ENCODE measurements at regions of chr12 and their contacts with region 1.

Region 1: DNA sequence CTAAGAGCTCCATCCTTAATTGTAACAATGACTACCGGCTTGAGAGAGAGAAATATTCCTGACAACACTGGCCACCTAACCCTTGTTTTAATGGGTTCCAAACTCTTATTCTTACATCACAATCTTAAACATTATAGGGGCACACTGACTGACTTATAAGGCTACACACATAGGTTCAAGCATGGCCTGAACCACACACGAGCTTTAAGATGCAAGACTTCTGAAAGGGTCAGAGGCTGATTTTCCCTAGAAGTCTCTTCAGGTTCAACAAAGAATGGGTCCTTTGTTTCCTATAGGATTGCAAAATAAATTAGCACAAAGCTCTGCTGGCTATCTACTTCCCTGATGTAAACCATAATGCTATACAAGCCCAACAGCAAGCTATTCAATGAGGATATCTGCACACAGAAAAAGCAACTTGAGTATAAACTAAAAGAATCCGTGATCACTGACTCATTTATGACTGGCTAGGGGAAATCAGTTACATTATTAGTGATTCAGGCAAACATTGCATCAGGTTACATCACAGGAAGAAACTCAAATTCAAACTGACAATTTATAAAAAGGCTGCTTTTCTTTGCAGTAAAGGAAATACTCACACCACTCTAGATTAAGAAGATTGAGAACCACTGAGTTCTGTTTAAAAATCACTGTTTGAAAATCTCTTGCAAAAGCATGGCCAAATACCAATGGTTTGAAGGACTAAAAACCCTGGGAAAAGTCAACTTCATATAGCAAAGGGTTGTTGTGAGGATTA is 8.5 kb downstream of the BTG1 start:
- DNase-seq: peak in 1 of 9 experiments; percentile 43
- ATAC-seq: no peak
- H3K4me3 ChIP-seq: peak overlapping the region; percentile 66 to 91
- H3K4me3 Mint-ChIP-seq: peak overlapping the region; percentile 96
- H3K27ac ChIP-seq: peak overlapping the region; percentile 45 to 92
- H3K27ac Mint-ChIP-seq: peak overlapping the region; percentile 99
- H3K4me1 ChIP-seq: peaks cover 47% of the 10 kb centered on the region
- H3K4me1 Mint-ChIP-seq: peaks cover 51% of the 10 kb centered on the region
- H3K27me3 ChIP-seq: no peaks in the 10 kb centered on the region
- H3K27me3 Mint-ChIP-seq: no peaks in the 10 kb centered on the region
- CTCF ChIP-seq: no peak

Region 2: GRCh38 chr12:91991399-91992187 is 145.6 kb before region 1 on chr12:
- CTCF ChIA-PET with region 1: interaction called, 6 read pairs
- POLR2A ChIA-PET with region 1: interaction called, 4 read pairs
- intact Hi-C with region 1: loop called in 1 of 2 experiments (anchors 5 kb)
- DNase-seq: peak in 2 of 9 experiments; percentile 61 to 77
- ATAC-seq: peak; percentile 71
- H3K4me3 ChIP-seq: no peak overlapping the region
- H3K4me3 Mint-ChIP-seq: no peak overlapping the region
- H3K27ac ChIP-seq: no peak overlapping the region
- H3K27ac Mint-ChIP-seq: peak overlapping the region; percentile 66
- H3K4me1 ChIP-seq: peaks cover 25% of the 10 kb centered on the region
- H3K4me1 Mint-ChIP-seq: peaks cover 65% of the 10 kb centered on the region
- H3K27me3 ChIP-seq: no peaks in the 10 kb centered on the region
- H3K27me3 Mint-ChIP-seq: no peaks in the 10 kb centered on the region
- CTCF ChIP-seq: peak; percentile 28

Region 3: GRCh38 chr12:92041742-92042141 is 95.4 kb before region 1 on chr12:
- CTCF ChIA-PET with region 1: interaction called, 5 read pairs
- POLR2A ChIA-PET with region 1: interaction called, 19 read pairs
- intact Hi-C with region 1: loop called in 1 of 2 experiments (anchors 5 kb)
- DNase-seq: peak in 5 of 9 experiments; percentile 24 to 62 (median 36)
- ATAC-seq: peak; percentile 90
- H3K4me3 ChIP-seq: no peak overlapping the region
- H3K4me3 Mint-ChIP-seq: peak overlapping the region; percentile 59
- H3K27ac ChIP-seq: no peak overlapping the region
- H3K27ac Mint-ChIP-seq: peak overlapping the region; percentile 85
- H3K4me1 ChIP-seq: peaks cover 58% of the 10 kb centered on the region
- H3K4me1 Mint-ChIP-seq: peaks cover 75% of the 10 kb centered on the region
- H3K27me3 ChIP-seq: no peaks in the 10 kb centered on the region
- H3K27me3 Mint-ChIP-seq: no peaks in the 10 kb centered on the region
- CTCF ChIP-seq: peak; percentile 26

Region 4: GRCh38 chr12:92094751-92095161 is 42.4 kb before region 1 on chr12:
- CTCF ChIA-PET with region 1: interaction called, 4 read pairs
- POLR2A ChIA-PET with region 1: interaction called, 3 read pairs
- intact Hi-C with region 1: loop called in 1 of 2 experiments (anchors 5 kb)
- DNase-seq: no peak
- ATAC-seq: no peak
- H3K4me3 ChIP-seq: no peak overlapping the region
- H3K4me3 Mint-ChIP-seq: peak overlapping the region; percentile 13
- H3K27ac ChIP-seq: no peak overlapping the region
- H3K27ac Mint-ChIP-seq: no peak overlapping the region
- H3K4me1 ChIP-seq: peaks cover 33% of the 10 kb centered on the region
- H3K4me1 Mint-ChIP-seq: peaks cover 60% of the 10 kb centered on the region
- H3K27me3 ChIP-seq: no peaks in the 10 kb centered on the region
- H3K27me3 Mint-ChIP-seq: no peaks in the 10 kb centered on the region
- CTCF ChIP-seq: no peak

Region 5: DNA sequence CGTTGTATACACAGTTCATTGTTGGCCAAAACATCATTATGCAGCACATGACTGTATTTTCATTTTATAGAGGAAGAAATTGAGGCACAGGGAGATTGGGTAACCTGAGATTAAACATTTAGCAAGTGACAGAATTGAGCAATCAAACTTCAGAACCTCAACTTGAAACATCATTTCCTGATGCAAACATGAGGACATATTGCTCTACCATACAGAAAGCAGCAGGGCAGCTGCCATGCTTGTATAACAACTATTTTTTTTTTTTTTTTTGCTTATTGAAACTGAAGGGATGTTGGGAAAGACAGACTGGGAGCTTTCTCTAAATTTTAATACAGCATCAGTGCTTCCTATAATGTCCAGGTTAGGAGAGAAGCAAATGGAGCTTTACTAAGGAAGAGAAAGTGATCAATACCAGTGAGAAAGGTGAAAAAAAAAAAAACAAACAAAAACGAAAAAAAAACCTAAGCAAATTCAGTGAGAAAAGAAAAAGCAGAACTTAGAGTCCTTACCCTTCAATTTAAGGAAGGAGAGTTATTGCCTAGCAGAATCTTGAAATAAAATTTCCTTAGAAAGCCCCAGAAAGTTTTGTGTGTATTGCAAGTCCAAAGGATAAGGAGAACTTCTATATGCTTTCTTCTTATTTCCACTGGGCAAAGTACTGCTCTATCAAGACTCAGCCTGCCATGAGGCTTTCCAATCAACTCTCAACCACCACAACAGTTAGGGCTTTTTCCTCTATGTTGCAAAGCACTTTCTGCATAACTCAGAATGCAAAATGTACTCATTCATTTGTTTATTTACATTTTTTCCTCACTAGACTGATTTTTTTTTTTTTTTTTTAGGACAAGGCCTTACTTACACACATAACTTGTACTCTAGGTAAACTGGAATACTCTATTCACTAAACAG is 13.1 kb before region 1 on chr12:
- CTCF ChIA-PET with region 1: interaction called, 3 read pairs
- POLR2A ChIA-PET with region 1: interaction called, 7 read pairs
- intact Hi-C with region 1: loop called in 1 of 2 experiments (anchors 2 kb)
- DNase-seq: no peak
- ATAC-seq: no peak
- H3K4me3 ChIP-seq: no peak overlapping the region
- H3K4me3 Mint-ChIP-seq: peak overlapping the region; percentile 45
- H3K27ac ChIP-seq: no peak overlapping the region
- H3K27ac Mint-ChIP-seq: peak overlapping the region; percentile 61
- H3K4me1 ChIP-seq: peaks cover 47% of the 10 kb centered on the region
- H3K4me1 Mint-ChIP-seq: peaks cover 55% of the 10 kb centered on the region
- H3K27me3 ChIP-seq: no peaks in the 10 kb centered on the region
- H3K27me3 Mint-ChIP-seq: no peaks in the 10 kb centered on the region
- CTCF ChIP-seq: no peak

Region 6: GRCh38 chr12:93256256-93256969 is 1119.3 kb after region 1 on chr12:
- CTCF ChIA-PET with region 1: no interaction called
- POLR2A ChIA-PET with region 1: no interaction called
- intact Hi-C with region 1: no loop called
- DNase-seq: no peak
- ATAC-seq: no peak
- H3K4me3 ChIP-seq: no peak overlapping the region
- H3K4me3 Mint-ChIP-seq: no peak overlapping the region
- H3K27ac ChIP-seq: no peak overlapping the region
- H3K27ac Mint-ChIP-seq: no peak overlapping the region
- H3K4me1 ChIP-seq: no peaks in the 10 kb centered on the region
- H3K4me1 Mint-ChIP-seq: no peaks in the 10 kb centered on the region
- H3K27me3 ChIP-seq: no peaks in the 10 kb centered on the region
- H3K27me3 Mint-ChIP-seq: no peaks in the 10 kb centered on the region
- CTCF ChIP-seq: no peak